OCI-LY7 (cell line): ENCODE measurements at regions of chr17 and their contacts with region 1.

Region 1: GRCh38 chr17:34771891-34772290 is 189.4 kb downstream of the CCT6B start:
- DNase-seq: no peak
- H3K4me3 ChIP-seq: no peak overlapping the region
- H3K27ac ChIP-seq: no peak overlapping the region
- H3K4me1 ChIP-seq: no peaks in the 10 kb centered on the region
- CTCF ChIP-seq: no peak

Region 2: GRCh38 chr17:34865732-34866131 is 93.8 kb after region 1 on chr17:
- CTCF ChIA-PET with region 1: no interaction called
- POLR2A ChIA-PET with region 1: no interaction called
- intact Hi-C with region 1: loop called (anchors 10 kb)
- DNase-seq: no peak
- H3K4me3 ChIP-seq: no peak overlapping the region
- H3K27ac ChIP-seq: no peak overlapping the region
- H3K4me1 ChIP-seq: no peaks in the 10 kb centered on the region
- CTCF ChIP-seq: no peak